Right ventricle myocardium superior (tissue), 1 donor: ENCODE measurements at regions of chr22 and their contacts with region 1.

Region 1: DNA sequence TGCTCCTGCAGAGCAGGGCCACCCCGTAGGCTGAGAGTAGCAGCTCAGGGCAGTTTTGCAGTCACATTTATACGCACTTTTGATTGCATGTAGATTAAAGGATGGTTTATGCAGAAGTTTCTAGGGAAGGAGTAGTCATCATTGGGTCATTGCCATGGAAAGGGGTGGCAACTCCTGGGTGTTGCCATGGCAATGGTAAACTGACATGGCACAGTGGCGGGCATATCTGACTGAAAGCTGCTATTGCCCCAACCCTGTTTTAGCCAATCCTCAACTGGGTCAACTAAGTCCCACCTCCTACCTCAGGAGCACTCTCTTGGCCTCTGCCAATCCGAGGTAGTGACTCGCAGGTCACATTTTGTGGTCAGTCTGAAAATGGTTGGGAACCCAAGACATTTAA is 2.4 kb upstream of the ARSA start:
- DNase-seq: no peak
- ATAC-seq: no peak

Region 2: GRCh38 chr22:50582562-50583293 is 47.6 kb before region 1 on chr22 and contains the start of gene CHKB:
- intact Hi-C with region 1: loop called (anchors 5 kb)
- DNase-seq: peak; percentile 99
- ATAC-seq: peak; percentile 95
- total RNA-seq, gene CHKB: 36.0 TPM

Region 3: DNA sequence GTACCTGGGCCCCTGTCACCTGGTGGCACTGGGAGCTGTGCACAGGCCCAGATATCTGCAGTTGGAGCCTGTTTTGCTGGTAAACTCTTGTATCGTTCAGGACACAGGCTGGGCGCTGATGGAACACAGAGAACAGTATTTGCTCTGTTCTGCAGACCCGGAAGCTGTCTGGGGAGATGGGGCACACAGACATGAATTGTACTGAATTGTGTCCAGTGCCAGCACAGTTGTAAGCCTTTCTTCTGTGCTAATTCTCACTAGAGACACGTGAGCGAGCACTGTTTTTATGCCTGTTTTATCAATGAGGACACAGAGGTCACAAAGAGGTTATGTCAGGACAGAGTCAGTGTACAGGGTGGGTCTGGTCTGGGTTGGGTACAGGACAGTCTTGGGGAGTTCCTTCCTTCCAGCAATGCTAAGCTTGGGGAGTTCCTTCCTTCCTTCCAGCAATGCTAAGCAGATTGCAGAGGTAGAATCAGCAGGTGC is 83.2 kb after region 1 on chr22:
- intact Hi-C with region 1: no loop called
- DNase-seq: peak; percentile 32
- ATAC-seq: peak; percentile 51